ENCODE measurements at regions of chr2 and their contacts with region 1.

Region 1: GRCh38 chr2:207166039-207166348 is 246 bp upstream of the KLF7 start:
- DNase-seq: peak; percentile 94 to 100
- ATAC-seq: peak; percentile 78 to 87
- H3K4me3 ChIP-seq: peak overlapping the region; percentile 76
- H3K27ac ChIP-seq: peak overlapping the region; percentile 97 to 100
- H3K4me1 ChIP-seq: peaks cover 29% of the 10 kb centered on the region
- CTCF ChIP-seq: no peak
- EP300 ChIP-seq: no peak
- POLR2A ChIP-seq: no peak
- RAD21 ChIP-seq: no peak; a peak in 1 of 5 replicates

Region 2: DNA sequence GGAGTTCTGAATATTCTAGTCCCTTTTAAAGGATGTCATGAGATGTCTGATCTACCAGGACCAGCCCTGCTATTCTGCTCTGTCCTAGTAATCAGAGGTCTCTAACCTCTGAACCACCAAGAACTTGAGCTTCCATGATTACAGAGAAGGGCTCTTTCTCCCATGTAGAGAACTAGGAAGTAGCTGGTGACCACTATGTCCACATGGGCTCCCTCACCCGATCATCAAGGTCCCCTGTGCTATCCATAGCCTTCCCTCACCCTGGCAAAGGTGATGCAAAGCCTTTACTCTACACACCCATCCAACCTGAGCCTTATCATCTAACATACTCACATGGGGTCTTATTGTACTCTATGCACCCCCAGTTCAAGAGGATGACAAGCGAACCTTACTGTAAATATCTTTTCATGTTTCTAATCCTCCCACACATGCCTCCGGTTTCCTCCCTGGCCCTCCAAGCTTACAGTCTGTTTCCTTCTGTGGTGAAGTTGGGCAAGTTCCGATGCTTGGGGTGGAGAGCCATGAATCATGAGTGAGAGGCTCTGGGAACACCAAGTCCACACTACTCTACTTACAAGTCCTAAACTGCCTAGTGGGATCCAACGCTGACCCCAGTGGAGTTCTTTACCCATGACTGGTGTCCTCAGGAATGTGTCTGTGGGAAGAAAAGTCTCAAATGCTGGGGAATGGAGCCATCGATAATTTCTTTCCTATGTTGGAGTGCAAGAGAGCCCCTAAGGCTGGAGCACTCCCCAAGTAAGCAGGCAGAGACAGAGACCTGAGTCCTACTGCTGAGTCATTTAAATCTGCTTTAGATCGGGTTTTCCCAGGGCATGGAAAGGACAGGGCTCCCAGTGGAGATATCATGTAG is 73.1 kb after region 1 on chr2:
- CTCF ChIA-PET with region 1: interaction called, 3 read pairs
- POLR2A ChIA-PET with region 1: interaction called, 13 read pairs
- DNase-seq: peak in 1 of 2 experiments; percentile 56
- ATAC-seq: peak; percentile 69 to 88
- H3K4me3 ChIP-seq: no peak overlapping the region
- H3K27ac ChIP-seq: peak overlapping the region; percentile 73 to 85; a peak in 5 of 6 replicates
- H3K4me1 ChIP-seq: peaks cover 18% of the 10 kb centered on the region
- CTCF ChIP-seq: no peak
- EP300 ChIP-seq: no peak
- POLR2A ChIP-seq: no peak
- RAD21 ChIP-seq: no peak

Region 3: DNA sequence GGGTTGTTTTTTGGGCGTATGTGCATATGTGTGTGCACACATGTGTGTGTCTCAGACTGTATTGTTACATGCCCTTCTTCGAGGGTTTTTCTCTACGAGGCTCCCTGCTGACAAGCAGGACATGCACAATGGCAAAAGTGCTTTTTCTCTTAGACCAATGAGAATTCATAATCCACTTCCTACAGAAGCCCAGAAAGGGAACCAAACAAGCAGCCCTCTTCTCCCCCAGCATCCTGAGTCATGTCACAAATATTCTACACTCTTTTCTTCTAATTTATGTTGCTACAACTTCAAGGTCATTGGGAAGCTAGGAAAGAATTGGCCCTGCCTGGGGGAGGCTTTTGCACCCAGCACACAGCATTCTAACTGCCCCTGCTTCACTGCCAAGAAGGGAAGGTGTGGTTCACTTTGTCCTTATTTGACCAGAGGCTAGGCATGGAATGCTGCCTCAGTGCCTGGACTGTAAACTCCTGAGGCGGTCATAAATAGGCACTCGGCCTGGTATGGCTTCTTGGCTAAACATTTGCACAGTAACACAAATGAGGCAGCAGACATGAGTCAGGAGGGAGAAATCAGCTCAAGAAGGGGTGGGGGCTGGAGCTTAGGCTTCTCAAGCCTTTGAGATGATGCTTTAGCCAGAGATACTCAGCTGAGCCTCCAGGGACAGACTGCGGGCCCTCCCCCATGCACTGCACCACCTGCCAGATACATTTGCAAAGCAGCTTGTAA is 92.4 kb after region 1 on chr2:
- CTCF ChIA-PET with region 1: interaction called, 3 read pairs
- POLR2A ChIA-PET with region 1: interaction called, 111 read pairs
- DNase-seq: peak; percentile 66 to 97
- ATAC-seq: peak; percentile 92 to 93
- H3K4me3 ChIP-seq: peak overlapping the region; percentile 10; the same call in 1 of the 3 replicates
- H3K27ac ChIP-seq: peak overlapping the region; percentile 89 to 96
- H3K4me1 ChIP-seq: peaks cover 76% of the 10 kb centered on the region
- CTCF ChIP-seq: no peak
- EP300 ChIP-seq: peak; percentile 46 to 80; a peak in 3 of 5 replicates
- POLR2A ChIP-seq: no peak
- RAD21 ChIP-seq: peak in 1 of 2 experiments; percentile 62

Region 4: GRCh38 chr2:207334624-207335371 is 168.8 kb after region 1 on chr2:
- CTCF ChIA-PET with region 1: interaction called, 5 read pairs
- POLR2A ChIA-PET with region 1: interaction called, 66 read pairs
- DNase-seq: peak; percentile 72 to 88
- ATAC-seq: peak; percentile 84 to 89
- H3K4me3 ChIP-seq: peak overlapping the region; percentile 19
- H3K27ac ChIP-seq: peak overlapping the region; percentile 87 to 88
- H3K4me1 ChIP-seq: peaks cover 74% of the 10 kb centered on the region
- CTCF ChIP-seq: no peak
- EP300 ChIP-seq: peak in 1 of 2 experiments; percentile 41; a peak in 1 of 5 replicates
- POLR2A ChIP-seq: no peak
- RAD21 ChIP-seq: peak; percentile 7 to 20; a peak in 1 of 5 replicates

Measured in A549 (cell line).